SK-MEL-5 (cell line): ENCODE measurements at regions of chr17 and their contacts with region 1.

Region 1: GRCh38 chr17:40417609-40418427 is at the start of gene TOP2A:
- DNase-seq: peak; percentile 100
- total RNA-seq, gene TOP2A: 114 and 117 TPM in 2 replicates

Region 2: GRCh38 chr17:40062329-40063186 is 355.3 kb before region 1 on chr17 and contains the start of gene THRA:
- in situ Hi-C with region 1: loop called (anchors 25 kb)
- DNase-seq: peak; percentile 57
- total RNA-seq, gene THRA: 14.3 and 15.9 TPM in 2 replicates

Region 3: GRCh38 chr17:40474419-40475002 is 56.7 kb after region 1 on chr17:
- in situ Hi-C with region 1: no loop called
- DNase-seq: no peak